Right ventricle myocardium inferior (tissue), 1 donor: ENCODE measurements at regions of chr2 and their contacts with region 1.

Region 1: GRCh38 chr2:69306822-69307578 is 80.0 kb downstream of the GFPT1 start:
- DNase-seq: peak; percentile 92
- ATAC-seq: peak; percentile 90

Region 2: GRCh38 chr2:68943581-68944568 is 363.1 kb before region 1 on chr2:
- intact Hi-C with region 1: loop called (anchors 2 kb)
- DNase-seq: no peak
- ATAC-seq: peak; percentile 63

Region 3: GRCh38 chr2:69012310-69013141 is 294.5 kb before region 1 on chr2:
- intact Hi-C with region 1: loop called (anchors 1 kb)
- DNase-seq: peak; percentile 77
- ATAC-seq: peak; percentile 72

Region 4: DNA sequence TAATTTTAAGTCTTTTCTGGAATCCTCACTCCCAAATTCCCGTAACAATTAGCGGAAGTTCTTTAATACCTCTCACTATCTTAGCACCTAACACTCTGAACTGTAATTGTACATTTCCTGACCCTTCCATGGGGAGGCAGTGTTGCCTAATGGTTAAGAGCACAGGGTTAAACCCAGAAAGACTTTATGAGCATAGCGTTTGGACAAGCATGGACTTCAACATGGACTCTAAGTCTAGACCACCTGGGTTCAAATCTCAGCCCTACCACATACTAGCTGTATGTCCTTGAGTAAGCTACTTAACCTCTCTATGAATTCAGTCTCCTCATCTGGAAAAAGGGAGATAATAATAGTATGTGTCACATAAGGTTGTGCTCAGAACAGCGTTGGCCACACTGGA is 281.0 kb before region 1 on chr2:
- intact Hi-C with region 1: loop called (anchors 5 kb)
- DNase-seq: no peak
- ATAC-seq: peak; percentile 62

Region 5: DNA sequence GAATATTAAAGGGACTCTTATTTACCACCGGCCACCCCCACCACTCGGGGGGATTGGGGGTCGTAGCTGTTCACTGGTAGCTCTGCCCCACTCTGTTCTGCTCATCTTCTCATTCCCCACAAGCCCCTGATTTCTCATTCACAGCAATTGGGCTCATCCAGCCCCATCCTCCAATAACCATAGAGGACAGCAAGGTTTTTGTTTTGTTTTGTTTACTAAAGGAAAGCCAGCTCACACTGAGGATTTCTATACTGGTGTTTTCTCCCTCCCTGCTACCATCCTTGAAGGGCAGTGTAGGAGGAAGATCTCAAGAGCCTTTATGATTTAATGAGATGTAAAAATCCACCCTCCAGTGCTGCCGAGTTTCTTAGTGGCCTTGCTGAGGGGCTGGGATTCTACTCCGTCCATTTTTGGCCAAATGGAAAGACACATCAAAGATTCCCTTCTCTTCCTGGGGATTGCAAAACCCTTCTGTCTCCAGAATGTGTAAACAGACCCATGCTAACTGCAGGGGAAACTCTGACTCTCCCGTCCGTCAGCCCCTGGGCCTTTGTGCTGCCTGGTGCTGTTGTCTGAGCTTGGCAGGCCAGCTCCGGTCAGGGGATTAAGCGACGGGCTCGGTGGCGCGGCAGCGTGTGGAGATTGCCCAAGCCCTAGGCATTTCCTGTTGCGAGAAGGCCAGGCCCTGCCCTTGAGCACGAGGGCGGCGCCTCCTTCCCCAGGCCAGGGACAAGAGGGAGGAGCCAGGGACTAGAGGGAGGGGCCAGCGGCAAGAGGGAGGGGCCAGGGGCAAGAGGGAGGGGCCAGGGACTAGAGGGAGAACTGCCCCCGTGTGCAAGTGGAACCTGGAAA is 129.0 kb before region 1 on chr2:
- intact Hi-C with region 1: loop called (anchors 10 kb)
- DNase-seq: peak; percentile 97
- ATAC-seq: peak; percentile 88

Region 6: DNA sequence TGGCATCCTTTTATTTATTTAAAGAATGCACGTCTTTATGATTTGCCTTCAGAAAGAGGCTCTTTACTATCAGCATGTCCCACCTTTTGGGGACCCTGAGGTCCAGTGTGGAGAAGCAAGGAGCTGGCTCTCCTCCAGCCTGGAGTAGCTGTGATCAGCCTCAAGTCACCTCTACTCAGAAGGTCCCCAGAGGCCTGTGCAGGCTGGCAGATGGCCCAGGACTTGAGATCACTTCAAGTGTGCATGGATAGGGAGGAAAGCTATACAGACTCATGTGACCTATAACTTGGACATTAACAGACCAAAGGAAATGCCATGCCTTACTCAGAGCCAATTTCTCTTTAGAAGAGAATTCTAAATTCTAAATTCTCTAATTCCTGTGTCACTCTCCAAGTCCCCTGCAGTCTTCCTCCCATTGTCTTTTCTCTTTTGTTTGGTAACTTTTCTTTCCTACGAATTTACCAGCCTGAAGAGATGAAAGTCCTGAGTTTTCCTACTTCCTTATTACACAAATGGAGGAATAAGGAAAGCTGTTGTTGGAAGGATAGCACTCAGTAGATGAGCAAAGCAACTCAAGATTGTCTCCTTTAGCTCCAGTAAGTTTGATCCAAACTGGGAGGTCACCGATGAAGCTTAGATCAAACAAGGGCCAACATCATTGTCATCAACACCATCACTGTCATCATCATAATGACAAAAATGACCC is 83.9 kb before region 1 on chr2:
- intact Hi-C with region 1: loop called (anchors 5 kb)
- DNase-seq: no peak
- ATAC-seq: peak; percentile 63

Region 7: DNA sequence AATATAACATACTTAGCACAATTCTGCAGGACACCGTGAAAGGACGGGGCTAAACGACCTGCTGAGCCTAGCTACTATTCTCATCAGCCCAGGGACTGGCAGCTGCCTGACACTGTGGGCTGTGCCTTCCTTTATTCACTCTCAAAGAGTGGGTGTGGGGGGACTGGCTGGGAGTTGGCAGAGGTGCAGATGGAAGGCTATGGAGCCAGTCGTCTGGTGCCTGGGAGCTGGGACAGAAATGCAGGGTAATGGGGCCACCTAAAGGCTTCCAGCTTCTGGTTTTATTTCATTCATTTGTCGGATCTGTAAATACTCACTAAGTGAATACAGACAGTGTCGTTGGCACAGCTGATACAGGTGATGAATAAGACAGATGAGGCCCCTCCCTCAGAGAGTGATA is 186.3 kb after region 1 on chr2:
- intact Hi-C with region 1: no loop called
- DNase-seq: no peak
- ATAC-seq: peak; percentile 68